ENCODE measurements at regions of chr1 and their contacts with region 1.

Region 1: DNA sequence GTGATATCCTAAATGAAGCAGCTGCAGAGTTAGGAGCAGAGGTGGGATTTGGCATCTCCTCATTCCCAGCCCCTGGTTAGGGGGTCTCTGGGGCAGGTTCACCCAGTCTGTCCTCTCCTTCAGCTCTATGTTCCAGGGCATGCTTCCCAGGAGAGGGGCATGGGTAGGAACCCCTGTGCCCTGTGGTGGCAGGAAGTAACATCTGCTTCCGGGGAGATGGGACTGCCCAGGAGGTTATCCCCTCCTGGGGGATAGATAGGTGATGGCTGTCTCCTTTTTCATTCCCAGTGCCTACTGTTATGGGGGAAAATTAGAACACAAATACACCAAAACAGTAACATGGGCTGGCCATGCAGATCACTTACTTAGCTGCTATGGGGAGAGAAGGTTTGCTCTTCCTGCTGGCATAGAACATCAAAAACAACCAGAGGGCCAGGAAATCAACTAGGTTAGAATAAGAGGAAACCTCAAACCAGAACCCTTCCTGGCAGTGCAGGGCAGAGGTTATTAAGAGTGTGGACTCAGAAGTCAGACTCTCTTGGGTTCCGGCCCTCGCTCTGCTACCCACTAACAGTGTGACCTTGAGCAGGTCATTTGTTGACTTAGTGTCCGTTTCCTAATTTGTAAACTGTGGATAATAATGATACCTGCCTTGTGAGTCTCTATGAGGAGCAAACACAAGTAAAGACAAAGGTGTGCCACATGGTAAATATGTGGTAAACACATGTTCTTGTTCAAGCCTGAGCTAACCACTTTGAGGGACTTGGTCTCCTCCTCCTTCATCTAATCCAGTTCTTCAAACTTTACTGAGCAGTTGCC is 157.8 kb upstream of the JUN start:
- DNase-seq: peak; percentile 82
- ATAC-seq: peak; percentile 89
- H3K4me3 Mint-ChIP-seq: peak overlapping the region; percentile 25
- H3K27ac Mint-ChIP-seq: peak overlapping the region; percentile 87
- H3K4me1 Mint-ChIP-seq: peaks cover 55% of the 10 kb centered on the region
- H3K27me3 Mint-ChIP-seq: no peaks in the 10 kb centered on the region

Region 2: GRCh38 chr1:58968360-58968952 is 26.8 kb after region 1 on chr1:
- CTCF ChIA-PET with region 1: interaction called, 13 read pairs
- DNase-seq: peak; percentile 53
- ATAC-seq: peak; percentile 78
- H3K4me3 Mint-ChIP-seq: peak overlapping the region; percentile 26
- H3K27ac Mint-ChIP-seq: peak overlapping the region; percentile 97
- H3K4me1 Mint-ChIP-seq: peaks cover 31% of the 10 kb centered on the region
- H3K27me3 Mint-ChIP-seq: no peaks in the 10 kb centered on the region

Region 3: DNA sequence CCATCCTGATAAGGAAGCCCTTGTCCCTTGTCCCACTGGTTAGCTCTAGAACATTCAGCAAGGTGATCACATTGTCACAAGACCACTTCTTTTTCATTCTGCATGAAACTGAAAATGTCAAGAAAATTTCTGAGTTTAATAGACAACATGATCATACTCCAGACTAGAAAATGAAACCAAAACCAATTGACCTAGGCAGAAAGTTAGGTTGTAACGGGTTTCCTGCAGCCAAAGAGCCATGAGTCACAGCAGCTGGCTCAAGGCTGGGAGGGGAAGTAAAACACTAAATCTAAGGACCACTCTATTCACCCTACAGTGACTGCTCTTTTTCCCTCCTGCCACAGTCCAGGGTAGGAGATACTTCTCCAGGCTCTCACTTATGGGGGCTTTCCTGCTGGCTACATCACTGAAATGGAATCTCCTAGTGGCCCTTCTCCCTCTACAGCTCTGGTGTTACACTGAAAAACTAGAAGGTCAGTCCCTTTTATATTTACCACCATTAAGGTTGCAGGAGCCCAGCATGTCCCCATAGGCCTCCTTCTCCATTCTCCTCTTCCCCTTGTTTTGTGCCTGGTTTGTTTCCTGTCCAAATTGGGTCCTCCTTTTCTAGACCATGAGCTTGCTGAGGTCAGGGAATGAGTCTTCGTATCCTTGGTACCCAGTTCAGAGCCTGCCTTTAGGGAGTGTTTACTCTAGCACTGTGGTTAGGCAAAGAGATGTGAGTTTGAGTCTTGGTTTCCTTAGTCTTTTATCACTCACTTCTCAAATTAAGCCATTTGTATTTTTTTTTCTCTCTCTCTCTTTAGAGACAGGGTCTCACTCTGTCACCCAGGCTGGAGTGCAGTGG is 78.7 kb after region 1 on chr1:
- CTCF ChIA-PET with region 1: interaction called, 10 read pairs
- DNase-seq: peak; percentile 80
- ATAC-seq: peak; percentile 97
- H3K4me3 Mint-ChIP-seq: peak overlapping the region; percentile 75
- H3K27ac Mint-ChIP-seq: peak overlapping the region; percentile 94
- H3K4me1 Mint-ChIP-seq: peaks cover 47% of the 10 kb centered on the region
- H3K27me3 Mint-ChIP-seq: no peaks in the 10 kb centered on the region